ENCODE measurements at regions of chr6 and their contacts with region 1.

Region 1: DNA sequence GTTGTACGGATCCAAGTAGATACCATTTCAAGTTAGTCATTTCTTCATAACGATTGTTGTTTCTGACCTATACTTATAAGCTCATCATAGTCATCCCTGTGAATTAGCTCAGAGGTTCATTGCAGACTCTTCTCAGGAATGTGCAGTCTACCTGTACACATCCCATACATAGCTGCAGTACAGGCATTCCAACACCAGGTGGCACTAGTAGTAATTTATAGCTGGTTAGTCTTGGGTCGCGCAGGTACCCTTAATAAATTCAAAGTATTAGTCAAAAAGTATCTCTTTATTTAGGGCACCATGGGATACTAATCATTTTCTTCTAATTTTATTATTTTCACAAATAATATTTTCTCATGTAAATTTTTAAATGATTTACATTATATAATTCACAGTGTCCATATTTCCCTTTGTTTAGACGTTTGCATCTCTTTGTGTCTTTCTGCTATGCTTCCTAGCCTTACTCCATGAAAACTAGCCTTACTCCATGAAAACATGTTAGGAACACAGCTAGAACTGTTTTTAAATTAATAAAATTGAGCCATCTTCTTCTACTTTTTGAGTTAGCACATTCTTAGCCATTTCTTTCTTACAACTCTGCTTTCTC is 128.6 kb upstream of the FAM83B start:
- DNase-seq: peak; percentile 63
- ATAC-seq: peak; percentile 97
- H3K4me3 ChIP-seq: no peak overlapping the region
- H3K27ac ChIP-seq: no peak overlapping the region
- H3K4me1 ChIP-seq: peaks cover 0 to 4% of the 10 kb centered on the region in 2 experiments; a peak in 1 of 4 replicates
- H3K27me3 ChIP-seq: no peaks in the 10 kb centered on the region
- CTCF ChIP-seq: peak; percentile 43 to 85 (median 84); a peak in 5 of 6 replicates
- POLR2A ChIP-seq: no peak
- RAD21 ChIP-seq: peak; percentile 76

Region 2: GRCh38 chr6:53986165-53986720 is 731.7 kb before region 1 on chr6:
- CTCF ChIA-PET with region 1: interaction called, 14 read pairs
- POLR2A ChIA-PET with region 1: no interaction called
- RAD21 ChIA-PET with region 1: no interaction called
- intact Hi-C with region 1: no loop called
- DNase-seq: peak; percentile 34
- ATAC-seq: peak; percentile 59
- H3K4me3 ChIP-seq: no peak overlapping the region
- H3K27ac ChIP-seq: no peak overlapping the region
- H3K4me1 ChIP-seq: peaks cover 8 to 36% of the 10 kb centered on the region in 2 experiments
- H3K27me3 ChIP-seq: no peaks in the 10 kb centered on the region
- CTCF ChIP-seq: peak; percentile 71 to 96 (median 77)
- POLR2A ChIP-seq: no peak
- RAD21 ChIP-seq: peak; percentile 93

Region 3: DNA sequence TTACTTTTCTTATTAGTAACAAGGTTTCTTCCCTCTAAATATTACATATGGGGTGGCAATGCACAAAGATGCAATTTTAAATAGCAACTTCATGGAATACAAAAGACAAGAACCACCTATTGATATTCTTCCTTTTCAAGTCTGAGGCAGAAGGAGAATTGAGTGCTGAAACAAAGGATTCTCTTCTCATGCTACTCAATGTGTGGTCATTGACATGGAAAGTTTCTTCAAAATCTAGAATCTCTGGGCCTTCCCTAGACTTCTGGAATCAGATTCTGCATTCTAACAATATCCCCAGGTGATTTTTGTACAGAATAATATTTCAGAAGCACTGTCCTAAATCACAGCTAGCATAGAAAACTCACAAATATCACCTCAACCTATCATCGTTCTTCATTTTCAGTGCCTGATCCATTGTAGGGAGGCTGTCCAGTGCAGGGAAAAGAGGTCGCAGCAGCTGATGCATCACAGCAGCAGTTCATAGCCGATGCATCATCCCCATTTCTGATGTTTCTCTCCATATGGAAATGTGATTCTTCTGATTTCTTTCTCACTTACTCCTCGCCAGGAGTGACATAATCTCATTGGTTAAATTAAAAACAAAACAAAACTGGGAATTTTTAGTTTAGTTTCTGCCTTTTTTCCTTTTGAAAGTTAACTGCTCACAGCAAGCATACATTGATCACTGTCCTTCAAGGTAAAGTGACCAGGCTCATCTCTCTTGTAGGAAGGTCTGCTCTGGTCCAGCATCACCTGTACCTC is 10.9 kb before region 1 on chr6:
- CTCF ChIA-PET with region 1: interaction called, 35 read pairs
- POLR2A ChIA-PET with region 1: no interaction called
- RAD21 ChIA-PET with region 1: no interaction called
- intact Hi-C with region 1: no loop called
- DNase-seq: no peak
- ATAC-seq: no peak
- H3K4me3 ChIP-seq: no peak overlapping the region
- H3K27ac ChIP-seq: no peak overlapping the region
- H3K4me1 ChIP-seq: no peaks in the 10 kb centered on the region
- H3K27me3 ChIP-seq: no peaks in the 10 kb centered on the region
- CTCF ChIP-seq: no peak
- POLR2A ChIP-seq: no peak
- RAD21 ChIP-seq: no peak

Region 4: GRCh38 chr6:54737247-54737646 is 19.3 kb after region 1 on chr6:
- CTCF ChIA-PET with region 1: interaction called, 10 read pairs
- POLR2A ChIA-PET with region 1: no interaction called
- RAD21 ChIA-PET with region 1: no interaction called
- intact Hi-C with region 1: no loop called
- DNase-seq: no peak
- ATAC-seq: peak; percentile 46; the same call in 1 of the 2 replicates
- H3K4me3 ChIP-seq: no peak overlapping the region
- H3K27ac ChIP-seq: no peak overlapping the region
- H3K4me1 ChIP-seq: no peaks in the 10 kb centered on the region
- H3K27me3 ChIP-seq: no peaks in the 10 kb centered on the region
- CTCF ChIP-seq: peak in 2 of 3 experiments; percentile 55 to 62; a peak in 4 of 6 replicates
- POLR2A ChIP-seq: no peak
- RAD21 ChIP-seq: no peak

Region 5: DNA sequence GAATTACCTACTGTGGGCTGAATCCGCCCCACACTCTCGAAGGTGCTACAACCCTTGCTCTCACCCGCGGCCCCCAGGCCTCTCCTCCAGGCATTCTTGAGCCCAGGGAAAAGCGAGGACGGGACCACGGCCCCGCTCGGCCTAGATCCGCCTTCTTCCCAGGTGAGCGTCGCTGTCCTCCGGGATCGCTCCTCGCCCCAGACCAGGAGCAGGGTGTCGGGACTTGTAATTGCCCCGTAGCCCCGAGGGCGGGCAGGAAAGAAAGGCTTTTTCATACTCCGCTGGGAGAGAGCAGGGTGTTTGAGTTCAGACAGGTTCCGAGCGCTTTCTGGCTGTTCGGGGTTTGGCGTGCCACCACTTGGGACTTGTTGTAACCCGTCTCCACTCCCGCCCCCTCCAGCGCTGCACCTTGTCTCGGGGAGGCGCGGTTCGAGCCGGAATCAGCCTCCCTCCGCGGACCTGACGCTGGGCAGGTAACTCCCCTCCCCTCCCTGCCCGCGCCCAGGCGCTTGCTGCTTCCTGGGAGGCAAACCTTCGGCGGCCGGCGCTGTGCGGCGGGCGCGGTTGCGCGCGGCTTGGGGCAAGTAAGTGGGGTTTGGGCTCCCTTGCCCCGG is 128.4 kb after region 1 on chr6 and contains the start of gene FAM83B:
- CTCF ChIA-PET with region 1: no interaction called
- POLR2A ChIA-PET with region 1: no interaction called
- RAD21 ChIA-PET with region 1: no interaction called
- intact Hi-C with region 1: loop called (anchors 10 kb)
- DNase-seq: peak; percentile 61
- ATAC-seq: peak; percentile 89
- H3K4me3 ChIP-seq: peak within 1 kb of the TSS; percentile 77 to 89
- H3K27ac ChIP-seq: peak within 1 kb of the TSS; percentile 79
- H3K4me1 ChIP-seq: peaks cover 6 to 29% of the 10 kb centered on the region in 2 experiments; a peak in 3 of 4 replicates
- H3K27me3 ChIP-seq: no peaks in the 10 kb centered on the region
- CTCF ChIP-seq: no peak
- POLR2A ChIP-seq: peak; percentile 60
- RAD21 ChIP-seq: 0 out of 2 replicates have a peak, but pooled peaks have one; percentile 8
- total RNA-seq, gene FAM83B: 16.9 TPM

Region 6: GRCh38 chr6:55069132-55069781 is 351.3 kb after region 1 on chr6:
- CTCF ChIA-PET with region 1: interaction called, 21 read pairs
- POLR2A ChIA-PET with region 1: no interaction called
- RAD21 ChIA-PET with region 1: interaction called, 5 to 6 read pairs
- intact Hi-C with region 1: loop called (anchors 1 kb)
- DNase-seq: peak; percentile 49
- ATAC-seq: peak; percentile 79
- H3K4me3 ChIP-seq: no peak overlapping the region
- H3K27ac ChIP-seq: no peak overlapping the region
- H3K4me1 ChIP-seq: no peaks in the 10 kb centered on the region
- H3K27me3 ChIP-seq: no peaks in the 10 kb centered on the region
- CTCF ChIP-seq: peak; percentile 65 to 82 (median 71)
- POLR2A ChIP-seq: no peak
- RAD21 ChIP-seq: peak; percentile 93

Region 7: DNA sequence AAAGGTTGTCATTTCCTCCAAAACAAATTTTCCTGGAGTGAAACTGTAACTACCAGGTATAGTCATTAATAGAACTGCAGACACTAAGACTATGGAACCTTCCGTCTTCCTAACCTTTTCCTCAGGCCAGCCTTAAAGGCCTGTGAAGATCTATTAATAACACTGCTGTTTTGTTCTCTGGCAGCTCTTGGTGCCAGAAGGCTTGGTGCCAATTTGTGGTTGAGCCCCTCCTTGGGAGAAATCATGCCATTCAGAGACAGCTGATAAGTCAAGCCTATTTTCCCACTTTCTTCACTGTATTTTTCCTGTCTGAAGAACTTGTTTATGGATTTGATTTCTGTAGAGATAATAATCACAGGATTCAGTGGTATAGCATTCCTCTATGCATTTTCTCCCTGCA is 521.1 kb after region 1 on chr6:
- CTCF ChIA-PET with region 1: interaction called, 4 read pairs
- POLR2A ChIA-PET with region 1: no interaction called
- RAD21 ChIA-PET with region 1: no interaction called
- intact Hi-C with region 1: loop called (anchors 1 kb)
- DNase-seq: no peak
- ATAC-seq: no peak
- H3K4me3 ChIP-seq: no peak overlapping the region
- H3K27ac ChIP-seq: no peak overlapping the region
- H3K4me1 ChIP-seq: no peaks in the 10 kb centered on the region
- H3K27me3 ChIP-seq: no peaks in the 10 kb centered on the region
- CTCF ChIP-seq: no peak
- POLR2A ChIP-seq: no peak
- RAD21 ChIP-seq: no peak

Measured in HCT116 (cell line).